Activated CD4-positive, alpha-beta memory T cell treated with anti-CD3 and anti-CD28 coated beads for 36 hours (primary cell): ENCODE measurements at regions of chr1 and their contacts with region 1.

Region 1: DNA sequence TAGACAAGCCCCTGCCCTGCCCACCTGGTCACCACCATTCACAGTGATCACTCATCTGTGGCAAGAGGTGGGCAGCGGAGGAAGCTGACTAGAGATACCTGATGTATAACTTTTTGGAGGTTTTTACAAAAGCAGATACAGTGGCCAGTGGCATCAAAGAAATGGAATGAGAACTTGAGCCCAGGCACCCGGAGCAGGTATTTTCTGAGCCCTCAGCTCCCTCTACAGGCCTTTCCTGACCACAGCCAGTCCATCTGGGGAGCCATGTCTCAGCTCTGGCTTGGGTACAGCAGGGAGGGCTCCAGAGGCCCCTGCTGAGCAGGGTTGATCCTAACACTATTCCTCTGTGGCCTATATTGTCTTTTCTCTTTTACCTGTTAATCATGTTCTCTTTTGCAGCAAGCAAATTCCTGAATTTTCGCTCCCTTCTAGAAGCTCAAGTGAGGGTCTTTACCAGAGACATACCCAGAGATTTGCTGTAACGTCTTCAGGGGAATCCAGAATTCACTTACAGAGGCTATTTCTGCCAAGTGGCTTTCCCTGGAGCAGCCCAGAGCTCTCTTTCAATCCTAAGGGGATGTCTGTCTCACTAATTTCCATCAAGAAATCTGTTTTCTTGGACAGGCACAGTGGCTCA is 27.3 kb downstream of the GPR157 start:
- DNase-seq: peak; percentile 45
- H3K4me3 Mint-ChIP-seq: no peak overlapping the region
- H3K27ac Mint-ChIP-seq: no peak overlapping the region
- H3K4me1 Mint-ChIP-seq: no peaks in the 10 kb centered on the region
- H3K27me3 Mint-ChIP-seq: no peaks in the 10 kb centered on the region

Region 2: GRCh38 chr1:9121496-9122409 is 20.1 kb after region 1 on chr1:
- CTCF ChIA-PET with region 1: interaction called, 10 read pairs
- POLR2A ChIA-PET with region 1: no interaction called
- intact Hi-C with region 1: no loop called
- DNase-seq: peak; percentile 71
- H3K4me3 Mint-ChIP-seq: peak overlapping the region; percentile 23
- H3K27ac Mint-ChIP-seq: peak overlapping the region; percentile 77
- H3K4me1 Mint-ChIP-seq: peaks cover 28% of the 10 kb centered on the region
- H3K27me3 Mint-ChIP-seq: no peaks in the 10 kb centered on the region

Region 3: DNA sequence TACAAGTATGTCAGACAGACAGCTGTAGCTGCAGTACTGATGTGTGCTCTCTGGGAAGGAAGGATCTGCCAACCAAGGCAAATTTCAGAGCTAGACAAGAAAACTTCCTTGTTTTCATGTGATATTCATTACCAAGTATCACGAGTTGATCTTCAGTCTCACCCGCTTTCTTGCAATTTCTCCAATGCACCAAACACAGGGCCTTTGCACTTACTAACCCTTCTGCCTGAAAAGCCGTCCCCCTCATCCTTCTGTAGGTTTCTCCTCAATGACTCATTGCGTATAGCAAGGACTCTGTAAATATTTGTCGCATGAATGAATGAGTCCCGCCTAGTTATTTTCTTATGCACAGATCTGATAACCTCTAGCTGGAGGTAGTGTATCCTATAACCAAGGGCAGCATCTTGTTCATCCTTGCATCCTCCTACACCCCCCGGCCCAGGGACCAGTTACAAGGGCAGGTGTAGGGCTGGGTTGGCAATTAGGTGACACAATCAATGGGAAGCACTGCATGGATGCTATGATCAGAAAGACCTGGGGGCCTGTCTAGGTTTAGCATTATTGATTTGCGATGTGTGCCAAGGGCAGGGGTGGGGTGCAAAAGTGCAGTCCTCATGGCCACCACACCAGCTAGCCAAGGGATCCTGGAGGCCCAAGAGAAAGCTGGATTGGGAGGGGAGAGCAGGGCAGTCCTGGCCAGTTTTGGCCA is 78.6 kb after region 1 on chr1:
- CTCF ChIA-PET with region 1: no interaction called
- POLR2A ChIA-PET with region 1: no interaction called
- intact Hi-C with region 1: no loop called
- DNase-seq: no peak
- H3K4me3 Mint-ChIP-seq: no peak overlapping the region
- H3K27ac Mint-ChIP-seq: no peak overlapping the region
- H3K4me1 Mint-ChIP-seq: peaks cover 7% of the 10 kb centered on the region
- H3K27me3 Mint-ChIP-seq: peaks cover 24% of the 10 kb centered on the region